ENCODE measurements at regions of chr14 and their contacts with region 1.

Region 1: DNA sequence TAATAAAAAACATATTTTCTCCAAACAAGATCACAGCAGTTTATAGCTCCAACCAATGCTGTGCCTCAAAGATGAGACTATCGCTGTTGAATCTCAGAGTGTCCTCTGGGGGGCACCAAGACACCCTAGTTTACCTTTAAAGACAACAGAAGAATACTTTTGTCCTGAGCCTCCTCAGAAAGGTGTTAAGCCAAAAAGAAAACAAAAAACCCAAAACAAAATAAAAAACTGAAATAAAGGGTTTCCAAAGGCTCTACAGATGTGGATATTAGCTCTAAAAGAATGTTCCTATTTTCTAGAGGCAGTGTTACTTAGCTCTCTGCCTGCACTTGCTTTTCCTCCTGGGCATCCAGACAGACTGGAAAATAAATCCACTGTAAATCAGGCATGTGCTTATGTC is 86.9 kb upstream of the TTC7B start:
- DNase-seq: no peak
- H3K4me3 ChIP-seq: no peak overlapping the region
- H3K27ac ChIP-seq: no peak overlapping the region
- H3K4me1 ChIP-seq: peaks cover 0 to 16% (median 1%) of the 10 kb centered on the region in 6 donors
- H3K27me3 ChIP-seq: no peaks in the 10 kb centered on the region
- CTCF ChIP-seq: peak; percentile 48 to 82 (median 73)
- POLR2A ChIP-seq: no peak

Region 2: GRCh38 chr14:90645842-90646443 is 257.2 kb before region 1 on chr14:
- intact Hi-C with region 1: no loop called
- DNase-seq: no peak
- H3K4me3 ChIP-seq: no peak overlapping the region
- H3K27ac ChIP-seq: no peak overlapping the region
- H3K4me1 ChIP-seq: peaks cover 0 to 15% (median 0%) of the 10 kb centered on the region in 6 donors
- H3K27me3 ChIP-seq: no peaks in the 10 kb centered on the region
- CTCF ChIP-seq: no peak
- POLR2A ChIP-seq: no peak

Region 3: GRCh38 chr14:91089958-91090535 is 186.9 kb after region 1 on chr14:
- intact Hi-C with region 1: no loop called
- DNase-seq: no peak
- H3K4me3 ChIP-seq: no peak overlapping the region
- H3K27ac ChIP-seq: no peak overlapping the region
- H3K4me1 ChIP-seq: peaks cover 0 to 17% (median 0%) of the 10 kb centered on the region in 6 donors
- H3K27me3 ChIP-seq: no peaks in the 10 kb centered on the region
- CTCF ChIP-seq: no peak
- POLR2A ChIP-seq: no peak

Region 4: DNA sequence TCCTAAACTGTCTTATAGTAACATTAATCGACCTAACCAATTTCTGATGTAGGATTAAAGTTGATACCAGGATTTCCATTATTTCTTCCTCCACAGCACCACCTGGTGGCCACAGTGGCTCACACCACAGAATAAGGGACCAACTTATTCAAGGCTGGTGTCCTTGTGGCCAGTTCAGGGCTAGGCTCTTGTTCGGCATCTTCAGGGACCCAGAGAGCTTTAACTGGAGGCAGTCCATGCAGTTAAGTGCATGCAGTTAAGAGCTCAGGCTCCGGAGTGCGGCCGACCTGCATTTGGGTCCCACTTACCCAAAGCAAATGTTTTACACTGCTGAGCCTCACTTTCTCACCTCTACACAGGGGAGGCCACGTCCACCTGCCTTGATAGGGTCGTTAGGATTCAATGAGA is 383.4 kb after region 1 on chr14:
- intact Hi-C with region 1: loop called (anchors 10 kb)
- DNase-seq: peak; percentile 88
- H3K4me3 ChIP-seq: no peak overlapping the region
- H3K27ac ChIP-seq: peak overlapping the region in 1 of 8 donors; percentile 5
- H3K4me1 ChIP-seq: peaks cover 0 to 28% (median 5%) of the 10 kb centered on the region in 6 donors
- H3K27me3 ChIP-seq: no peaks in the 10 kb centered on the region
- CTCF ChIP-seq: peak; percentile 76 to 94 (median 90)
- POLR2A ChIP-seq: no peak